ENCODE measurements at regions of chr10 and their contacts with region 1.

Region 1: GRCh38 chr10:133394064-133394663 is at the start of gene MTG1:
- DNase-seq: peak; percentile 97
- H3K4me3 ChIP-seq: peak within 1 kb of the TSS; percentile 99
- H3K27ac ChIP-seq: peak within 1 kb of the TSS; percentile 99
- H3K4me1 ChIP-seq: peaks cover 56% of the 10 kb centered on the region
- CTCF ChIP-seq: no peak
- total RNA-seq, gene MTG1: 60.3 and 85.6 TPM in 2 replicates

Region 2: GRCh38 chr10:132158122-132158741 is 1235.9 kb before region 1 on chr10:
- CTCF ChIA-PET with region 1: no interaction called
- POLR2A ChIA-PET with region 1: no interaction called
- intact Hi-C with region 1: loop called (anchors 5 kb)
- DNase-seq: peak; percentile 81
- H3K4me3 ChIP-seq: no peak overlapping the region
- H3K27ac ChIP-seq: peak overlapping the region; percentile 39
- H3K4me1 ChIP-seq: peaks cover 41% of the 10 kb centered on the region
- CTCF ChIP-seq: no peak

Region 3: GRCh38 chr10:133309111-133309719 is 84.9 kb before region 1 on chr10:
- CTCF ChIA-PET with region 1: no interaction called
- POLR2A ChIA-PET with region 1: interaction called, 3 read pairs
- intact Hi-C with region 1: loop called (anchors 5 kb)
- DNase-seq: peak; percentile 83
- H3K4me3 ChIP-seq: peak overlapping the region; percentile 82
- H3K27ac ChIP-seq: peak overlapping the region; percentile 75
- H3K4me1 ChIP-seq: peaks cover 22% of the 10 kb centered on the region
- CTCF ChIP-seq: no peak

Region 4: DNA sequence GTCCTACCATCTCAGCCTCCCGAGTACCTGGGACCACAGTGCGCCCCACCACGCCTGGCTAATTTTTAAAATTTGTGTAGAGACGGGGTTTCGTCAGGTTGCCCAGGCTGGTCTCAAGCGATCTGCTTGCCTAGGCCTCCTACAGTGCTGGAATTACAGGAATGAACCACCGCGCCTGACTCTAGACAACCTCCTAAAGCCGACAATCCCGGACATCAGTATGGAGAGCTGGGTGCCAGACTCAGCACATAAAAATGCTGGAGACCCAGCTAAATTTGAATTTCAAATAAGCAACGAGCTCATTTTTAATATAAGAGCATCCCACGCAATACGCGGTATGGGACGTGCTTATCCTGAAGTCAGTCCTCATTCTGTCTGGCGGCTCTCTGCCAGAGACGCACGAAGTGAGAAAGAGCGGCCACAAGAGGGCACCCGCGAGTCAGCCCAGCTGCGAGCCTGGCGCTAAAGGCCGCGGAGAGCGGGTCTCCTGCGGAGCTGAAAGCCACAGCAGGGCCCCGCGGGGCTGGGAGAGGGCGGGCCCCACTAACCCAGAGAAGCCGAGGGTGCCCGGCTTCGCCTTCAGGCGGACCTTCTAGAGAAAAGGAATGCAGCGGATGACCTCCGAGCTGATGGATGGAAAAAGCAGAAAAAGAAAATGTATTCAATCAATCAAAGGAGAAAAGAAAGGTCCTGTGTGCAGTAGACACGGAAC is 64.5 kb before region 1 on chr10:
- CTCF ChIA-PET with region 1: interaction called, 4 read pairs
- POLR2A ChIA-PET with region 1: interaction called, 7 read pairs
- intact Hi-C with region 1: loop called (anchors 2 kb)
- DNase-seq: peak; percentile 88
- H3K4me3 ChIP-seq: no peak overlapping the region
- H3K27ac ChIP-seq: no peak overlapping the region
- H3K4me1 ChIP-seq: peaks cover 8% of the 10 kb centered on the region
- CTCF ChIP-seq: peak; percentile 95

Region 5: GRCh38 chr10:133357285-133358151 is 36.6 kb before region 1 on chr10 and contains the start of gene FUOM:
- CTCF ChIA-PET with region 1: interaction called, 9 read pairs
- POLR2A ChIA-PET with region 1: interaction called, 5 read pairs
- intact Hi-C with region 1: loop called (anchors 2 kb)
- DNase-seq: peak; percentile 84
- H3K4me3 ChIP-seq: peak within 1 kb of the TSS; percentile 76
- H3K27ac ChIP-seq: no peak within 1 kb of the TSS
- H3K4me1 ChIP-seq: peaks cover 7% of the 10 kb centered on the region
- CTCF ChIP-seq: 0 out of 2 replicates have a peak, but pooled peaks have one; percentile 23
- total RNA-seq, gene FUOM: 46.0 and 47.5 TPM in 2 replicates

Region 6: GRCh38 chr10:133616371-133617130 is 222.4 kb after region 1 on chr10:
- CTCF ChIA-PET with region 1: no interaction called
- POLR2A ChIA-PET with region 1: no interaction called
- intact Hi-C with region 1: no loop called
- DNase-seq: no peak
- H3K4me3 ChIP-seq: no peak overlapping the region
- H3K27ac ChIP-seq: no peak overlapping the region
- H3K4me1 ChIP-seq: no peaks in the 10 kb centered on the region
- CTCF ChIP-seq: no peak